Endothelial cell of umbilical vein (primary cell): ENCODE measurements at regions of chr20 and their contacts with region 1.

Region 1: DNA sequence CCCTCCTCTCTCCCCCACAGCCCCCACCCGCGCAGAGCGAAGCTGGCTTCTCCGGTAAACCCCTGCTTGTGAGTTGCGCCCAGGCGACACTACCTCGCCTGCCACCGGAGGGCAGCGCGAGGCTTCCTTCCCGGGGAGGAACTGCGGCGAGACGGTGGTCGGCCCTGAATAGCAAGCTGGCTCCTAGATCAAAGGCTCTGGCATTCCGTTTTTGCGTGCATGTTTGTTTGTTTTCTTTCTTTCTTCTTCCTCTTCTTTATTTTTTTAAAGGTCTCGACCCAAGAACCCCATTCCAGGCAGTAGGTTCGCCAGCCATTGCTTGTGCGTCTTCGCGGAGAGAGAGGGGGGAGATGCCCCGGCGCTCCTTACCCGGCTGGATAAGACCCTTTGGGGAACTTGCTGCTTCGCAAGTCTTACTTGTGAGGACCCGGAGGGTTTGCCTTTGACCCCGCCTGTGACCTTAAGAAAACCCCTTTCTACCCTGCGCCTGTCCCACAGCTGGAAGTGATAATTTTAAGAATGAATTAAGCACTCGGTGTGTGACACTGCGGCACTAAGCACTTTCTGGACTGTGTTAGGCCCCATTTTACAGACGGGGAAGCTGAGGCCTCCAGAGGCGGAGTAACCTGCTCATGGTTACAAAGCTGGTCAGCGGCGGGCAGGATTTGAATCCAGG is 92.7 kb upstream of the SIRPA start:
- DNase-seq: peak; percentile 76
- H3K4me3 ChIP-seq: peak overlapping the region; percentile 49 to 66 (median 56)
- H3K27ac ChIP-seq: peak overlapping the region; percentile 42
- H3K4me1 ChIP-seq: peaks cover 13% of the 10 kb centered on the region
- H3K27me3 ChIP-seq: peaks cover 3 to 5% of the 10 kb centered on the region in 2 experiments
- CTCF ChIP-seq: peak; percentile 64 to 84
- POLR2A ChIP-seq: no peak

Region 2: GRCh38 chr20:1685304-1686052 is 117.0 kb before region 1 on chr20:
- CTCF ChIA-PET with region 1: no interaction called
- POLR2A ChIA-PET with region 1: no interaction called
- dilution Hi-C with region 1: no loop called
- intact Hi-C with region 1: no loop called
- DNase-seq: no peak
- H3K4me3 ChIP-seq: no peak overlapping the region
- H3K27ac ChIP-seq: no peak overlapping the region
- H3K4me1 ChIP-seq: no peaks in the 10 kb centered on the region
- H3K27me3 ChIP-seq: peaks cover 10 to 24% of the 10 kb centered on the region in 2 experiments
- CTCF ChIP-seq: no peak
- POLR2A ChIP-seq: no peak

Region 3: DNA sequence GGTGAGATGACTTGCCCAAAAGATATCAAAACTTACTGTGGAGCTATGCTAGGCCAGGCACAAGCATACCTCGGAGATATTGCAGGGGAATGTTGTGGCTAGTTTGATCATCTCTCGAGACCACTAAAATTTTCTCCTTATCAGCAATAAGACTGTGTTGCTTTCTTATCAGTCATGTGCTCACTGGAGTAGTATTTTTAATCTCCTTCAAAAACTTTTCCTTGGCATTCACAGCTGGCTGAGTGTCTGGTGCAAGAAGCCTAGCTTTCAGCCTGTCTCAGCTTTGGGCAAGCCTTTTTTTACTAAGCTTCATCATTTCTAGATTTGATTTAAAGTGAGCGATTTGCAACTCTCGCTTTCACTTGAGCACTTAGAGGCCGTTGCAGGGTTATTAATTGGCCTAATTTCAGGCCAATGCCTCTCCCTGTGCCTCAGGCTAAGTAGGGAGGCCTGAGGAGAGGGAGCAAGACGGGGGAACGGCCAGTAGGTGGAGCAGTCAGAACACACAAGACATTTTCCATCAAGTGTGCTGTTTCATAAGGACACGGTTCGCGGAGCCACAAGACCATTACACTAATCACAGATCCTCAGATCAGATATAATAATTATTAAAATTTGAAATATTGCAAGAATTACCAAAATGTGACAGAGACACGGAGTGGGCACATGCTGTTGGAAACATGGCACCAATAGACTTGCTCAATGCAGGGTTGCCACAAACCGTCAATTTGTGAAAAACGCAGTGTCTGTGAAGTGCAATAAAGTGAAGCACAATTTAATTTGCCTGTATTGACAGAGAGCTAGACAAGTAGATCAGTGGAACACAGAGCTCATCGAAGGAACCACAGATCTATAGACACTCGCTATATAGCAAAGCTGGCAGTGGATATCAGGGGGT is 38.1 kb before region 1 on chr20:
- CTCF ChIA-PET with region 1: interaction called, 26 read pairs
- POLR2A ChIA-PET with region 1: no interaction called
- dilution Hi-C with region 1: no loop called
- intact Hi-C with region 1: loop called (anchors 1 kb)
- DNase-seq: peak; percentile 76
- H3K4me3 ChIP-seq: no peak overlapping the region
- H3K27ac ChIP-seq: no peak overlapping the region
- H3K4me1 ChIP-seq: peaks cover 3% of the 10 kb centered on the region
- H3K27me3 ChIP-seq: no peaks in the 10 kb centered on the region
- CTCF ChIP-seq: peak; percentile 84 to 86
- POLR2A ChIP-seq: no peak

Region 4: GRCh38 chr20:1830240-1830639 is 27.7 kb after region 1 on chr20:
- CTCF ChIA-PET with region 1: interaction called, 24 read pairs
- POLR2A ChIA-PET with region 1: interaction called, 3 read pairs
- dilution Hi-C with region 1: no loop called
- intact Hi-C with region 1: loop called (anchors 1 kb)
- DNase-seq: no peak
- H3K4me3 ChIP-seq: no peak overlapping the region
- H3K27ac ChIP-seq: no peak overlapping the region
- H3K4me1 ChIP-seq: peaks cover 16% of the 10 kb centered on the region
- H3K27me3 ChIP-seq: peaks cover 7 to 17% of the 10 kb centered on the region in 2 experiments
- CTCF ChIP-seq: no peak
- POLR2A ChIP-seq: no peak

Region 5: DNA sequence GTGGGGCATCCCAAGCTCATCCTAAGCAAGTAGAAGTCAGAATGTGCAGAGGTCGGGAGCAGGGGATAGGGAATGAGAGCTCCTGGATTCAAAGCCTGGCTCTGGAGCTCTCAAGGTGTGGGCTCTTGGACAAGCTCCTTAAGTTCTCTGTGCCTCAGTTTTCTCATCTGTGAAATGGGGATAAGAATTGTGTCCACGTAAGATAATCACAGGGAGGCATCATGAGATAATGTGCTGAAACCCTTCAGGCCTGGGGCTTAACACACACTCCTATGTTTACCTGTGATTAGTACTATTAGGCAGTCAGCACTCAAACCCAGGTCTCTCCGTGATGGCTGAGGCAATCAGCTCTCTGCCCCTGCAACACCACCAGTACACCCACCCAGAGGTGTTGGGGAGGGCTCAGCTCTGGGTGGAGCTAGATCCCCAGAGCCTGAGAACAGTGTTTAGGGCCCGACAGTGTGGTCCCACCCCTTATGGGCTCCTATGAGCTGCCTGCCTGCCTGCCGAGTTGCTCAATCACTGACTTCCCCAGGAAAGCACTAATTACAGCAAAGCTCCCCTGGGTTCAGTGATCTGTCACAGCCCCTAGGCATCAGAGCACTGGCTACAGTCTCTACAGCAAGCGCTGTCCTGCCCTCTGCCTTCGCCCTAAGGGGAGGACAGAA is 86.4 kb after region 1 on chr20:
- CTCF ChIA-PET with region 1: interaction called, 14 read pairs
- POLR2A ChIA-PET with region 1: no interaction called
- dilution Hi-C with region 1: no loop called
- intact Hi-C with region 1: no loop called
- DNase-seq: no peak
- H3K4me3 ChIP-seq: no peak overlapping the region
- H3K27ac ChIP-seq: no peak overlapping the region
- H3K4me1 ChIP-seq: peaks cover 4% of the 10 kb centered on the region
- H3K27me3 ChIP-seq: peaks cover 0 to 2% of the 10 kb centered on the region in 2 experiments
- CTCF ChIP-seq: no peak
- POLR2A ChIP-seq: no peak

Region 6: GRCh38 chr20:1965520-1966351 is 163.2 kb after region 1 on chr20:
- CTCF ChIA-PET with region 1: interaction called, 15 read pairs
- POLR2A ChIA-PET with region 1: no interaction called
- dilution Hi-C with region 1: no loop called
- intact Hi-C with region 1: loop called (anchors 1 kb)
- DNase-seq: peak; percentile 63
- H3K4me3 ChIP-seq: peak overlapping the region in 1 of 3 experiments; percentile 30
- H3K27ac ChIP-seq: no peak overlapping the region
- H3K4me1 ChIP-seq: peaks cover 4% of the 10 kb centered on the region
- H3K27me3 ChIP-seq: peaks cover 15 to 18% of the 10 kb centered on the region in 2 experiments
- CTCF ChIP-seq: peak; percentile 92 to 94
- POLR2A ChIP-seq: no peak